ENCODE measurements at regions of chr17 and their contacts with region 1.

Region 1: GRCh38 chr17:40113110-40113906 is 8.5 kb upstream of the MSL1 start:
- DNase-seq: peak; percentile 94
- ATAC-seq: peak; percentile 65
- H3K4me3 ChIP-seq: peak overlapping the region; percentile 60
- H3K27ac ChIP-seq: peak overlapping the region; percentile 98
- H3K4me1 ChIP-seq: peaks cover 51% of the 10 kb centered on the region
- H3K27me3 ChIP-seq: no peaks in the 10 kb centered on the region
- CTCF ChIP-seq: peak; percentile 84

Region 2: DNA sequence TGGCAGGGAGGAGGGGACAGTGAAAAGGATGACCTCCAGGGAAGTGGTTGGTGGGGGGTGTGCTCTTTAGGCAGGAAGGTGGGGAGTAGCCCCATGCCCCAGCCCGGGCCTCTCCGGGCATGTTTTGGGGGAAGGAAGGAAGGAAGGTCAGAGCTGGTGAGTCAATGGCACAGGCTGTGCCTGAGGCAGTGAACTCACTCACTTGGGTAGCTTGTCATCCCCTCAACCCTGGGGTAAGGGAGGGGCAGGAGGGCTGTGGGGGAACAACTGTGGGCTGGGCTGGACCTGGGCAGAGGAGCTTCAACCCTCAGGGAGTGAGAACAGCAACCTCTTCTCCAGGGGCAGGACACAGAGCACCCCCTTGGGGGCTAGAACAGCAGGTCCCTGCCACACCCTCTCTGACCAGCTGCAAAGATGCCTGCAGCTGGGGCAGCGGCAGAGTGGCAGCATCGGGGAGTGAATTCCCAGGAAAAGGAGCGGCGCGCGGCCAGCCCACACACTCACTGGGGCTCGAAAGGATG is 91.8 kb before region 1 on chr17:
- CTCF ChIA-PET with region 1: interaction called, 4 read pairs
- POLR2A ChIA-PET with region 1: interaction called, 3 read pairs
- intact Hi-C with region 1: loop called (anchors 5 kb)
- DNase-seq: peak; percentile 93
- ATAC-seq: peak; percentile 68
- H3K4me3 ChIP-seq: peak overlapping the region; percentile 41; the same call in 1 of the 2 replicates
- H3K27ac ChIP-seq: peak overlapping the region; percentile 97
- H3K4me1 ChIP-seq: peaks cover 69% of the 10 kb centered on the region
- H3K27me3 ChIP-seq: no peaks in the 10 kb centered on the region
- CTCF ChIP-seq: no peak

Region 3: GRCh38 chr17:40062329-40063186 is 50.8 kb before region 1 on chr17 and contains the start of gene THRA:
- CTCF ChIA-PET with region 1: interaction called, 10 read pairs
- POLR2A ChIA-PET with region 1: no interaction called
- intact Hi-C with region 1: loop called (anchors 2 kb)
- DNase-seq: peak; percentile 55
- ATAC-seq: peak; percentile 83
- H3K4me3 ChIP-seq: peak within 1 kb of the TSS; percentile 94
- H3K27ac ChIP-seq: no peak within 1 kb of the TSS
- H3K4me1 ChIP-seq: peaks cover 5% of the 10 kb centered on the region; the same call in 1 of the 2 replicates
- H3K27me3 ChIP-seq: no peaks in the 10 kb centered on the region
- CTCF ChIP-seq: no peak
- total RNA-seq, gene THRA: 6.6 and 11.2 TPM in 2 replicates

Region 4: DNA sequence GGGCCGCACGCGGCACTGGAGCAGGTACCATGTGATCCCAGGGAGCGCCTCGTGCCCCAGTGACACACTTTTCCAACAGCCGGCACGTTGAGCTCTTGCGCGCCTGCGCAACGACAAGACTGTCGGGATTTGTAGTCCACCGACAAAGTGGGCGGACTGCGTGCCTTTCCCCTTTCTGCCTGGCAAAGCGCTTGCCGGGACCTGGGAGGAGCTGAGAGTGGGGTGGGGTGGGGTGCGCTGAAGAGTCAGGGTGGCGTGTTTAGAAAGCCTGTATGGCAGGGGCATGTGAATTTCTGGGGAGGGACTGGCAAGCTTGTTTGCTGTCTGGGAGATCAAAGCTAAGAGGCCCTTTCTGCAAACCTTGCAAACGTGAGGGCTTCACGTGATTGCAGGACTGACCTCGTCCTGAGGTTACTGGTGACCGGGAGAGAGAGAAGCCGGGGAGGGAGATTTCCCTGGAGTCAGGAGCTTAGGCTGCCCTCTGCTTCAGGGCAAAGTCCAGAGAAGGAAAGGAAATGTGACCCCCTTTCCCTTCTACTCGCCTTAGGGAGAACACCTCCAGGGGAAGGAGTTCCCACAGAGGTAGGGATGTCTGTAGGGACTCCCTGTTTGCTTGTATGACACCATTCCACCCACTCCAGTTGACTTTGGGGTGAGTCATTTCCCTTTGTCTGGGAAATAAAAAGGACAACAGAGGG is 12.5 kb before region 1 on chr17:
- CTCF ChIA-PET with region 1: interaction called, 7 read pairs
- POLR2A ChIA-PET with region 1: interaction called, 10 read pairs
- intact Hi-C with region 1: loop called (anchors 1 kb)
- DNase-seq: peak; percentile 96
- ATAC-seq: peak; percentile 55
- H3K4me3 ChIP-seq: peak overlapping the region; percentile 80
- H3K27ac ChIP-seq: peak overlapping the region; percentile 99
- H3K4me1 ChIP-seq: peaks cover 46% of the 10 kb centered on the region
- H3K27me3 ChIP-seq: no peaks in the 10 kb centered on the region
- CTCF ChIP-seq: no peak

Region 5: DNA sequence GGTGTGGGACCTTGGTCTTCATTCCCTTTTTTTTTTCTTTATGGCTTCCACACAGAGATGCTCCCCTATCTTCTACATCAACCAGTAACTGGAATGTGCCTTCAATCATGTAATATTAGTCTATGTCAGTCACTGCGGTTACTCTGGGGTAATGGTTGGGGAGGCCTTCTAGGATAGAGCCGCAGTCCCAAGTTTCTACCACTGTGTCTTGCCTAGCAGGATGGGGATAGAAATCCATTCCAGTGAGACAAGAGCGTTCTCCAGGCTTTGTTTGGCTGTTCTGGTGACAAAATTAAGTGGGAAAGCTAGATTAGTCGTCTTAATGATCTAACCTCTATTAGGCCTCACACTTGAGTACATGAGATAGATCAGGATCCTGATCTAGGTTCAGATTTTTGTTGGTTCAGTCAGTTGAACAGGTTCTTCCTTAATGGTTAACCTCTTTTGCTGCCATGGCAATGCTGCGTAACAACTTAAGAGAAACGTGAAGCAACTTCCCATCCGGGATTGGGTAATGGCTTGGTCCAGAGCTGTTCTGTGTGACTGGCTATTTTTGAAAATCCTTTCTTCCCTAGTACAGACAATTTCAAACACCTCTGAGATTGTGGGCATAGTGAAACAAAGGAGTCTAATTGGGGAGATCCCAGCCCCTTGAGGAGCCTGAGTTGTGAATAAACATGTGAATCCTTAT is 17.2 kb after region 1 on chr17:
- CTCF ChIA-PET with region 1: no interaction called
- POLR2A ChIA-PET with region 1: no interaction called
- intact Hi-C with region 1: no loop called
- DNase-seq: no peak
- ATAC-seq: no peak
- H3K4me3 ChIP-seq: no peak overlapping the region
- H3K27ac ChIP-seq: no peak overlapping the region
- H3K4me1 ChIP-seq: no peaks in the 10 kb centered on the region
- H3K27me3 ChIP-seq: no peaks in the 10 kb centered on the region
- CTCF ChIP-seq: no peak

Region 6: GRCh38 chr17:40168262-40168832 is 55.0 kb after region 1 on chr17:
- CTCF ChIA-PET with region 1: interaction called, 26 read pairs
- POLR2A ChIA-PET with region 1: no interaction called
- intact Hi-C with region 1: loop called (anchors 1 kb)
- DNase-seq: peak; percentile 65
- ATAC-seq: peak; percentile 57
- H3K4me3 ChIP-seq: no peak overlapping the region
- H3K27ac ChIP-seq: no peak overlapping the region
- H3K4me1 ChIP-seq: no peaks in the 10 kb centered on the region
- H3K27me3 ChIP-seq: no peaks in the 10 kb centered on the region
- CTCF ChIP-seq: peak; percentile 61

Region 7: DNA sequence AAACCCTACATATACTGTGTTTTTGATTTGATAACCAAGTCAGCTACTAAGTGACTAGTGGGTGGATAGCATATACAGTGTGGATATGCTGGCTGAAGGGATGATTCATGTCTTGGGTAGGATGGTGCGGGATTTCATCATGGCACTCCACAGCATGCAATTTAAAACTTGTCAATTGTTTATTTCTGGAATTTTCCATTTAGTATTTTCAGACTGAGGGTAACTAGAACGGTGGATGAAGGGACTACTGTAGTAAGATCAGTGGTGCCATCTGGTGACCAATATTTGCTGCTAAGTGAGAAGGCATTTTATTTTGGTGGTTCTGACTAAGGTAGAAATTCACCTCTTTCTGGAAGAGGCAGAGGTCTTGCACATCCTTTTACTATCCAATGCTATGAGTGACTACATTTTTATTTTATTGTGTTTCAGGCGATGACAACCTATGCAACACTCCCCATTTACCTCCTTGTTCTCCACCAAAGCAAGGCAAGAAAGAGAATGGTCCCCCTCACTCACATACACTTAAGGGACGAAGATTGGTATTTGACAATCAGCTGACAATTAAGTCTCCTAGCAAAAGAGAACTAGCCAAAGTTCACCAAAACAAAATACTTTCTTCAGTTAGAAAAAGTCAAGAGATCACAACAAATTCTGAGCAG is 177.4 kb after region 1 on chr17:
- CTCF ChIA-PET with region 1: no interaction called
- POLR2A ChIA-PET with region 1: no interaction called
- intact Hi-C with region 1: loop called (anchors 5 kb)
- DNase-seq: peak; percentile 76
- ATAC-seq: peak; percentile 23
- H3K4me3 ChIP-seq: no peak overlapping the region
- H3K27ac ChIP-seq: no peak overlapping the region
- H3K4me1 ChIP-seq: peaks cover 14% of the 10 kb centered on the region; the same call in 1 of the 2 replicates
- H3K27me3 ChIP-seq: no peaks in the 10 kb centered on the region
- CTCF ChIP-seq: peak; percentile 74

Measured in PC-3 (cell line).